ENCODE measurements at regions of chr13 and their contacts with region 1.

Region 1: GRCh38 chr13:31044377-31045285 is 112.2 kb downstream of the TEX26 start:
- DNase-seq: peak; percentile 72
- H3K4me3 ChIP-seq: no peak overlapping the region
- H3K27ac ChIP-seq: peak overlapping the region; percentile 74
- H3K4me1 ChIP-seq: peaks cover 32% of the 10 kb centered on the region
- H3K27me3 ChIP-seq: no peaks in the 10 kb centered on the region
- CTCF ChIP-seq: peak; percentile 97 to 98

Region 2: DNA sequence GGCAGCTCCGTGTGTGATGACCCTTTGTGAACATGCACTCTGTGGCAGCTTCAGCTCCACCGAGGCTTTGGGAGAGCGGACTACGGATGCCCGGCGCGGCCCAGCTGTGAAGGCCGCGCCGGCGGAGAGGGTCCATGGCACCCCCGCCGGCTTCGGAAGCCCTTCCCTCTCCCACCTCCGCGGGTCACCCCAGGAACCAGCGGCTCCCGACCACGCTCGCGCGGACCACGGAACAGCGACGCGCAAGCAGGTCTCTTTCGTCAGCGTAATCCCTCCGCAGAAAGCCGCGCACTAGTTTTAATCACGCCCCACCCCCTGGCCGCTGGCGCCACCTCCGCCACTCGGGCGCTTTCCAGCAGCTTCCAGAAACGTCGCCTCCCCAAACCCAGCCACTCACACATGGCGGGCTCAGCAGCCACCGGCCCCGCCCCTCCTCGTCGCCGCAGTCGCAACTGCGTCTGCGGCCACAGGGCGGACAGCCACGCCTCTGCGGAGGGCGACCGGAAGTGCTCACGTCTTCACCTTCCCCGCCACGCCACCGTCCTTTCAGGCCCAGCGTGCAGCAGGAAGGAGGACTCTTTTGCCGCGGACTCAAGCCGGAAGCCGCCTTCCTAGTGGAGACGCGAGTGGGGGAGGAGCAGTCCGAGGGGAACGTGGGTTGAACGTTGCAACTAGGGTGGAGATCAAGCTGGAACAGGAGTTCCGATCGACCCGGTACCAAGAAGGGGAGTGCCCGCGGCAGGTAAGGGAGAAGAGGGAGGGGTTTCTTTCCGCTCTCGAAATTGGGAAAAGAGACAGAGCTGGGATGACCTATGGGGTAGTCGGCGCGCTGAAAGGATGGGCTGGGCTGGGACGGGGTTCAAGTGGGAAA is 427.1 kb before region 1 on chr13 and contains the start of gene USPL1:
- CTCF ChIA-PET with region 1: no interaction called
- dilution Hi-C with region 1: no loop called
- in situ Hi-C with region 1: no loop called
- intact Hi-C with region 1: loop called (anchors 10 kb)
- DNase-seq: peak; percentile 99
- H3K4me3 ChIP-seq: peak within 1 kb of the TSS; percentile 71 to 78 (median 75)
- H3K27ac ChIP-seq: peak within 1 kb of the TSS; percentile 96
- H3K4me1 ChIP-seq: peaks cover 3% of the 10 kb centered on the region
- H3K27me3 ChIP-seq: no peaks in the 10 kb centered on the region
- CTCF ChIP-seq: peak in 1 of 2 donors; percentile 20
- total RNA-seq, gene USPL1: 12.4 to 13.5 TPM

Region 3: DNA sequence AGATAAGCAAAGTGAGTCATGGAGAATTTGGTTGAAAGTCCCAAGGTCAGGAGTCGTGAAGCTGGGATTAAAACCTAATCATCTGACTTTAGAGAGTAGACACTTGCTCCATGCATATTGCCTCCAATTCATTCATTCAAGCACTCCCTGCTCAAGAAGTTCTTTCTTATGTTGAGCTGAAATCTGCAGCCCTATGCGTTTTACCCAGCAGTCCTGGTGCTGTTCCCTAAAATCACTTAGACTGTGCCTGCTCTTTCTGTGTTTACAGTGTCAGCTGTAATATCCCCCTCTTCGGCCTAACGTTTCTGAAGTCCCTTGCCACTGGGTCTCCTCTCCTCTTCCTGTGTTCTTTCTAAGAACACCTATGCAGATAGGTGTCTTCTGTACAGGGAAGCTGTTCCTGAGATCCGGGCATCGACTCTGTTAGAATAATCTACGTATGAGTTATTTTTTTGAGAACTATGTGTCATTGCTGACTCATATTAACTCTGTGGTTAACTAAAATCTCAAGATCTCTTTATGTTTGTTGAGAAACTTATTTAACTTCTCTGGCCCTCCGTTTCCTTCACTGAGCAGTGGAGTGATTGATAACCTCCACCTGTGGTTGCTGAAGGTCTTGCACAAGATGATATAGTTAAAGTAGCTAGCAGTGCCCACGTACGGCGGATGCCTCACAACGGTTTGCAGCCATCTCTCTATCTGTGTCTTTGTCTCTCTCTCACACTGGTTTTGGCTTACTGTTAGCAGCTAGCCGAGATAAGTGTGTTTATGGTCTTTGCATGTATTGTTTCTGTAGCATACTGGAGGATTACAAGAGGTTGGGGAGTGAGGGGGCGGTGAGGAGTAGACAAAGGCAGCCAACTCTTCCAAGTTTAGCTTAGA is 304.6 kb before region 1 on chr13:
- CTCF ChIA-PET with region 1: no interaction called
- dilution Hi-C with region 1: no loop called
- in situ Hi-C with region 1: no loop called
- intact Hi-C with region 1: loop called (anchors 1 kb)
- DNase-seq: peak; percentile 92
- H3K4me3 ChIP-seq: no peak overlapping the region
- H3K27ac ChIP-seq: peak overlapping the region; percentile 54
- H3K4me1 ChIP-seq: peaks cover 45% of the 10 kb centered on the region
- H3K27me3 ChIP-seq: no peaks in the 10 kb centered on the region
- CTCF ChIP-seq: no peak

Region 4: GRCh38 chr13:30978981-30979956 is 65.4 kb before region 1 on chr13:
- CTCF ChIA-PET with region 1: interaction called, 4 read pairs
- dilution Hi-C with region 1: no loop called
- in situ Hi-C with region 1: no loop called
- intact Hi-C with region 1: loop called (anchors 1 kb)
- DNase-seq: no peak
- H3K4me3 ChIP-seq: no peak overlapping the region
- H3K27ac ChIP-seq: no peak overlapping the region
- H3K4me1 ChIP-seq: peaks cover 20% of the 10 kb centered on the region
- H3K27me3 ChIP-seq: no peaks in the 10 kb centered on the region
- CTCF ChIP-seq: peak; percentile 38 to 86

Region 5: DNA sequence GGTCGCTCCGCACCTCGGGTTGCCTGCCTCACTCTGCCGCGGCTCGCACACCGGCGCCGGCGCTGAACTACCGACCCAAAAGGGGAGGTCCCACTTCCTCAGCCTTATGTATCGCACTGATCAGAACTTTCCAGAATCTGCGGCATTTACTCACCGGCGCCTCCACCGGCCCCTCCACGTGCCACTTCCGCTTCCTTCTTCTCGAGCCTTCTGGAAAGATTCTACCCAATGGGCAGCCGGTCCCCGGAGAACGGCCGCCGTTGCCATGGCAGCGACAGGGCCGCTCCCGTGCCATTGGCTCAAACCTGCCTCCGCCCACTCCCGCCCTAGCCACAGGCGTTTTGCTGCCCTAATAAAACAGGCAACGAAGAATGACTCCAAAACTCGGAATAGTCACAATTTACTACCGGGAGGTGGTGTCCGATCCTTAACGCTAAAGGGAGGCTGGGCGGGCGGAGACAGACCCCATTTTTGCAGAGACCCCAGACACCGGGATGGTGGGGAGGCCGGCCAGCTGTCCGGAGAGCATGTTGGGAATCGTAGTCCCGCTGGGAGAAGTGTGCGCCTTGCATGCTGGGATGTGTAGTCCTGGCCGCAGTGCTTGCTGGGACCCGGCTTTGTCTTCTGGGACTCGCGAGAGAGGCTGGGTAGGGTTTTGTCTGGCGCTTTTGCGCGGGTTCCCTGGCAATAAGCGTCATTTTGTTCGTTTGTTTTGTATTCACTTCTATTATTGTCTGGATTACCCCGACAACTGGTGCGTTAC is 117.4 kb after region 1 on chr13 and contains the start of gene HSPH1:
- CTCF ChIA-PET with region 1: interaction called, 3 read pairs
- dilution Hi-C with region 1: no loop called
- in situ Hi-C with region 1: no loop called
- intact Hi-C with region 1: loop called (anchors 1 kb)
- DNase-seq: peak; percentile 99
- H3K4me3 ChIP-seq: peak within 1 kb of the TSS; percentile 81 to 90 (median 84)
- H3K27ac ChIP-seq: peak within 1 kb of the TSS; percentile 97
- H3K4me1 ChIP-seq: peaks cover 7% of the 10 kb centered on the region
- H3K27me3 ChIP-seq: no peaks in the 10 kb centered on the region
- CTCF ChIP-seq: peak in 1 of 2 donors; percentile 35
- total RNA-seq, gene HSPH1: 49.0 to 113 TPM

Region 6: DNA sequence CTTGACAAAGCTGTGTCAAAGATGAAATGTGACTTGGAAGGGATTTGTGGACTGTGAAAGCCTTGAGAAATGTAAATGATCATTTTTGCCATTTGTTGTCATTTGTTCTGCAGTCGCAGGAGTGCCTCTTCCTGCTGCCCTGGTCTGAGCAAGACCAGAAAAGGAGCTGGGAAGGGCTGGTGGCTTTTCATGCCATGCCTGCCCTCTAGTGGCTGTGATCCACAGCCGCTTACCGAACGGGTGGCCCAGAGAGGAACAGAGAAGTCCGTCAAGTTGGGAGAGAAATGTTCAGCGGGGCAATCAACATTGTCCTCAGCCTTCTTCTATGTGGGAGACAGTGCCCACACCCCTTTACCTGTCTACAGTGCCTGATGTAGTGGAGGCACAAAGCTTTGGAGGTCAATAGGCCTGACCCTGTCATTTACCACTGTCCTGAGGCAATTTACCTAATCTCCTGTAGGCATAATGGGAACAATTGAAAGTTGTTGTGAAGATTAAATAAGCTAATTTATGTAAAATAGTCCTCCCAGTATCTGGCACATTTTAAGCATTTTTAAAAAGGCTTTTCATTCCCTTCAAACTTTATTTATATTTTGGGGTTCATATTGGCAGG is 379.6 kb after region 1 on chr13:
- CTCF ChIA-PET with region 1: no interaction called
- dilution Hi-C with region 1: no loop called
- in situ Hi-C with region 1: no loop called
- intact Hi-C with region 1: loop called (anchors 5 kb)
- DNase-seq: peak; percentile 62
- H3K4me3 ChIP-seq: no peak overlapping the region
- H3K27ac ChIP-seq: no peak overlapping the region
- H3K4me1 ChIP-seq: no peaks in the 10 kb centered on the region
- H3K27me3 ChIP-seq: peaks cover 4% of the 10 kb centered on the region
- CTCF ChIP-seq: peak; percentile 92 to 96